Posterior vena cava (tissue), 2 donors: ENCODE measurements at regions of chr16 and their contacts with region 1.

Region 1: GRCh38 chr16:16191493-16192167 is 31.7 kb downstream of the ABCC6 start:
- DNase-seq: no peak

Region 2: GRCh38 chr16:15427648-15428239 is 763.9 kb before region 1 on chr16:
- intact Hi-C with region 1: loop called in 1 of 2 experiments (anchors 10 kb)
- DNase-seq: peak; percentile 85

Region 3: GRCh38 chr16:15739950-15740349 is 451.7 kb before region 1 on chr16:
- intact Hi-C with region 1: loop called in 1 of 2 experiments (anchors 5 kb)
- DNase-seq: no peak

Region 4: GRCh38 chr16:16150117-16150877 is 41.3 kb before region 1 on chr16:
- intact Hi-C with region 1: loop called in 1 of 2 experiments (anchors 5 kb)
- DNase-seq: peak; percentile 82